ENCODE measurements at regions of chr6 and their contacts with region 1.

Region 1: GRCh38 chr6:166650824-166651807 is 24.1 kb upstream of the RPS6KA2 start:
- DNase-seq: peak; percentile 76
- H3K4me3 ChIP-seq: no peak overlapping the region
- H3K27ac ChIP-seq: no peak overlapping the region
- H3K4me1 ChIP-seq: peaks cover 33% of the 10 kb centered on the region
- H3K27me3 ChIP-seq: no peaks in the 10 kb centered on the region
- CTCF ChIP-seq: no peak

Region 2: DNA sequence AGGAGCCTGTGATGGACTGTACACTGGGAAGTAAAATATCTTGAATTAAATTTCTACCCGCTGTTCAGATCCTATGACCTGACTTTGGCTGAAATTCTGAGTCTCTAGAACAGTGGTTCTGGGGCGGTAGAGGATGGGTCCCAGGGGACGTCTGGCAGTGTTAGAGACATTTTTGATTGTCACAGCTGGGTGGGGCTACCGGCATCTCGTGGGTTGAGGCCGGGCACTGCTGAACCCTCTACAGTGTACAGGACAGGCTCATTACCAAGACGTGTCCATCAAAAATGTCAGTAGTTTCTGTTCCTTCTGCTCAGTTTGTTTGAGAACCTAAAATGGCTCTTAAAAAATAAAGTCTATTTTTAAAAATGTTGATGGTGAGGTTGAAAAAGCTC is 12.5 kb before region 1 on chr6:
- CTCF ChIA-PET with region 1: no interaction called
- POLR2A ChIA-PET with region 1: interaction called, 10 read pairs
- intact Hi-C with region 1: no loop called
- DNase-seq: no peak
- H3K4me3 ChIP-seq: no peak overlapping the region
- H3K27ac ChIP-seq: peak overlapping the region; percentile 83
- H3K4me1 ChIP-seq: peaks cover 34% of the 10 kb centered on the region
- H3K27me3 ChIP-seq: no peaks in the 10 kb centered on the region
- CTCF ChIP-seq: no peak

Region 3: GRCh38 chr6:166775180-166776081 is 124.3 kb after region 1 on chr6:
- CTCF ChIA-PET with region 1: no interaction called
- POLR2A ChIA-PET with region 1: no interaction called
- intact Hi-C with region 1: no loop called
- DNase-seq: peak; percentile 86
- H3K4me3 ChIP-seq: no peak overlapping the region
- H3K27ac ChIP-seq: no peak overlapping the region
- H3K4me1 ChIP-seq: no peaks in the 10 kb centered on the region
- H3K27me3 ChIP-seq: peaks cover 10% of the 10 kb centered on the region
- CTCF ChIP-seq: peak; percentile 87

Region 4: DNA sequence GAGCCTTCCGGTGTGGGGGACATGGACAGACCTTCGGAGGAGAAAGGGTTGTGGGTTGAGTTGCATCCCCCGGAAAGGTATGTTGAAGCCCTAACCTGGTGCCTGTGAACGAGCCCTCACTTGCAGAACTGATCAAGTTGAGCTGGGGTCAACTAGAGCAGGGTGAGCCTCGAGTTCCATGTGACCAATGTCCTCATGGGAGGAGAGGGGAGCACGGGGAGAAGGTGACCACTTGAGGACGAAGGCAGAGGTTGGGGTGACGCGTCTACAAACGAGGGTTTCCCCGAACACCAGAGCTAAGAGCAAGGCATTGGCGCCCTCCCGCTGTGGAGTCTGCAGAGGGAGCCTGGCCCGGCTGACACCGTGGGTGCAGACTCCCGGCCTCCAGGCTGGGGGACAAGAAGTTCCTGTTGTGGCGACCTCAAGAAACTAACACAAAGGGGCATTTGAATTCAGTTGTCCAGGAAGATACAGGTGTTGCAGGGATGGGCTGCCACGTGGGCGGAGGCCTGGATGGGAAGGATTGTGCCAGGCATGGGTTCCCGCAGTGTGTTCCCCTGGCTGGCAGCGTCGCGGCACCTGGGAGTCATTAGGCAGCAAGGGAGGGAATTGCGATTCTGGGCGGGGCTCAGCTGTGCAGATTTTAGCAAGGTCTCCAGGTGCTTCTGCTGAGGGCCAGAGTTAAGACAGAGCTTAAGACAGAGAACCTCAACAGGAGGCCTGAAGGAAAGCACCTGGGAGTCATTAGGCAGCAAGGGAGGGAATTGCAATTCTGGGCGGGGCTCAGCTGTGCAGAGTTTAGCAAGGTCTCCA is 619.6 kb after region 1 on chr6:
- CTCF ChIA-PET with region 1: no interaction called
- POLR2A ChIA-PET with region 1: no interaction called
- intact Hi-C with region 1: no loop called
- DNase-seq: no peak
- H3K4me3 ChIP-seq: no peak overlapping the region
- H3K27ac ChIP-seq: no peak overlapping the region
- H3K4me1 ChIP-seq: no peaks in the 10 kb centered on the region
- H3K27me3 ChIP-seq: no peaks in the 10 kb centered on the region
- CTCF ChIP-seq: no peak

Region 5: DNA sequence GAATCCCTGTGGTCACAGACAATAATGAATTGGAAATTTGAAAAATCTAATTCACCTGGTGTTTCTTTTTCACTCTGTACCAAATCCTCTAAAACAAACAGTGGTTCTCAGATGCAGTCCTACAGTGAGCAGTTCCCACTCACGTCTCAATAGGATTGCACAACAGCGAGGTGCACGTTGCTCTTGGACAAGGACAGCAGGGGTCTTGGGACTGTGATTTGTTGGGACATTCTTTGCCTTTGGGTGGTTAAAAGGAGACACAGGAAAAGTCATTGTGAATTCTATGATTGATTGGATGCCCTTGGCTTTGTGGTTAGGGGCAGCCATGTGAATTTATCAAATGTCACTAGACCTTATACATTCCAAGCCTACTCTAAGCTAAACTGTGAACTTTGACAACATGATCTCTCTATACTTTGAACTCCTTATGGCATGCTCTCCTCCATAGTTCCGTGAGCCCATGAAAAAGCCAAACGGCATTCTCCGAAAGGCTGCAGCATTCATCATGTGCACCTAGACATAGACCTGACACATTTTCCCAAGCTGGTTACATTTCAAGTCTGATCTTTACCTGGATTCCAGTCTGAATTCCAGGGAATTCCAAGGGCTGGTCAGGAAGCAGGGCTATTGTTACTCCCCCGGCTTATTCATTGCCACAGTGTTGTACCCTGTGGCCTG is 640.6 kb after region 1 on chr6:
- CTCF ChIA-PET with region 1: no interaction called
- POLR2A ChIA-PET with region 1: no interaction called
- intact Hi-C with region 1: no loop called
- DNase-seq: no peak
- H3K4me3 ChIP-seq: no peak overlapping the region
- H3K27ac ChIP-seq: no peak overlapping the region
- H3K4me1 ChIP-seq: no peaks in the 10 kb centered on the region
- H3K27me3 ChIP-seq: peaks cover 7% of the 10 kb centered on the region
- CTCF ChIP-seq: no peak